Adrenal gland (tissue), 19 donors: ENCODE measurements at regions of chr13 and their contacts with region 1.

Region 1: GRCh38 chr13:52665325-52665724 is 12.7 kb downstream of the SUGT1 start:
- DNase-seq: no peak
- H3K4me3 ChIP-seq: no peak overlapping the region
- H3K27ac ChIP-seq: no peak overlapping the region
- H3K4me1 ChIP-seq: no peaks in the 10 kb centered on the region
- H3K27me3 ChIP-seq: no peaks in the 10 kb centered on the region
- CTCF ChIP-seq: peak in 5 of 6 experiments; percentile 28 to 60 (median 34)
- POLR2A ChIP-seq: no peak

Region 2: DNA sequence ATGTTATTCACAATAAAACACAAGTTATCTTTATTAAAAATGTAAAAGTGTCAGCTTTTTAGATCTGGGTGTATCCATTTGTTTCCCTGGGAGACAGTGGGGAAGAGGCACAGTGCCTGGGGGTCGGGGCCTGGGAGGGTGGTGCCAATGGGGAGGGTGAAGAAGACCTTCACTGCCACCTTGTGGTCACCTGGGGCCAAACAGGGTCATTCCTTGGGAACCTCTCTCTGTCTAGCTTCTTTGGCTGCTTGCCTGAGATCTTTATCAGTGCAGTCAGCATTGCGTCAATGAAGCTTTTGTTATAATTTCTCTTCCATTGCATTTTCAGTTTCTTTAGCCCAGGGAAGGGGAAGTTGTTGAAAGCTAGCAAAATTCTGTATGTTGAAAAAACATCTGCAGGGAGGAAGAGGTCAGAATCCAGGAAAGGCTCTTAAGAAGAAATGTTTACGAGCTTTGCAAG is 144.0 kb after region 1 on chr13:
- intact Hi-C with region 1: loop called in 1 of 2 experiments (anchors 10 kb)
- DNase-seq: peak; percentile 80 to 91 (median 82)
- H3K4me3 ChIP-seq: no peak overlapping the region
- H3K27ac ChIP-seq: no peak overlapping the region
- H3K4me1 ChIP-seq: no peaks in the 10 kb centered on the region
- H3K27me3 ChIP-seq: no peaks in the 10 kb centered on the region
- CTCF ChIP-seq: peak; percentile 39 to 79 (median 66)
- POLR2A ChIP-seq: no peak

Region 3: GRCh38 chr13:53405616-53406015 is 740.3 kb after region 1 on chr13:
- intact Hi-C with region 1: no loop called
- DNase-seq: no peak
- H3K4me3 ChIP-seq: no peak overlapping the region
- H3K27ac ChIP-seq: no peak overlapping the region
- H3K4me1 ChIP-seq: no peaks in the 10 kb centered on the region
- H3K27me3 ChIP-seq: no peaks in the 10 kb centered on the region
- CTCF ChIP-seq: no peak
- POLR2A ChIP-seq: no peak